ENCODE measurements at regions of chr20 and their contacts with region 1.

Region 1: GRCh38 chr20:3888622-3889488 is at the start of gene PANK2:
- DNase-seq: peak; percentile 99
- H3K4me3 ChIP-seq: peak within 1 kb of the TSS; percentile 100
- H3K27ac ChIP-seq: peak within 1 kb of the TSS; percentile 95 to 98
- H3K4me1 ChIP-seq: peaks cover 4% of the 10 kb centered on the region
- H3K27me3 ChIP-seq: no peaks in the 10 kb centered on the region
- CTCF ChIP-seq: peak in 3 of 4 experiments; percentile 15 to 60 (median 56)
- POLR2A ChIP-seq: peak; percentile 97
- total RNA-seq, gene PANK2: 49.7 to 53.9 TPM

Region 2: DNA sequence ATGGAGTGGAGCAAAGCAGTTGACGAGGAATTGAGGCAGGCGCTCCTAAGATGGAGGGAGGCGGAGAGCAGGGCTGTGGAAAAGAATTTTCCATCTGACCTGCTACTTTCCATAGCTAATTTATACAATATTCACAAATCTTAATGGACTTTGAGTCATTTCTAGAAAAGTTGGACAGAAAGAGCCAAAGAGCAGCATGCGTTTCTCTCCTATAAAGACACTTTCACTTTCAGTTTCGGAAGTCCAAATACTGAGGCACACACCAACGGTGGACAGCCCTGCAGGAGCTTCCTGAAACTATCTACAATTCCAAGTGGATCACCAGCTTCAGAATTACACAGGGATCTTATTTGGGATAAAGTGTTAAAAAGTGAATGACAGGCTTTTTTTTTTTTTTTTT is 43.8 kb after region 1 on chr20:
- intact Hi-C with region 1: loop called (anchors 5 kb)
- DNase-seq: no peak
- H3K4me3 ChIP-seq: peak overlapping the region; percentile 12 to 20
- H3K27ac ChIP-seq: peak overlapping the region; percentile 23 to 69
- H3K4me1 ChIP-seq: no peaks in the 10 kb centered on the region
- H3K27me3 ChIP-seq: no peaks in the 10 kb centered on the region
- CTCF ChIP-seq: no peak
- POLR2A ChIP-seq: no peak

Region 3: GRCh38 chr20:4014031-4014474 is 125.2 kb after region 1 on chr20:
- intact Hi-C with region 1: loop called (anchors 5 kb)
- DNase-seq: peak; percentile 93
- H3K4me3 ChIP-seq: peak overlapping the region; percentile 90 to 98
- H3K27ac ChIP-seq: peak overlapping the region; percentile 95 to 96
- H3K4me1 ChIP-seq: no peaks in the 10 kb centered on the region
- H3K27me3 ChIP-seq: no peaks in the 10 kb centered on the region
- CTCF ChIP-seq: peak in 3 of 4 experiments; percentile 69 to 93 (median 75)
- POLR2A ChIP-seq: peak; percentile 30

Region 4: DNA sequence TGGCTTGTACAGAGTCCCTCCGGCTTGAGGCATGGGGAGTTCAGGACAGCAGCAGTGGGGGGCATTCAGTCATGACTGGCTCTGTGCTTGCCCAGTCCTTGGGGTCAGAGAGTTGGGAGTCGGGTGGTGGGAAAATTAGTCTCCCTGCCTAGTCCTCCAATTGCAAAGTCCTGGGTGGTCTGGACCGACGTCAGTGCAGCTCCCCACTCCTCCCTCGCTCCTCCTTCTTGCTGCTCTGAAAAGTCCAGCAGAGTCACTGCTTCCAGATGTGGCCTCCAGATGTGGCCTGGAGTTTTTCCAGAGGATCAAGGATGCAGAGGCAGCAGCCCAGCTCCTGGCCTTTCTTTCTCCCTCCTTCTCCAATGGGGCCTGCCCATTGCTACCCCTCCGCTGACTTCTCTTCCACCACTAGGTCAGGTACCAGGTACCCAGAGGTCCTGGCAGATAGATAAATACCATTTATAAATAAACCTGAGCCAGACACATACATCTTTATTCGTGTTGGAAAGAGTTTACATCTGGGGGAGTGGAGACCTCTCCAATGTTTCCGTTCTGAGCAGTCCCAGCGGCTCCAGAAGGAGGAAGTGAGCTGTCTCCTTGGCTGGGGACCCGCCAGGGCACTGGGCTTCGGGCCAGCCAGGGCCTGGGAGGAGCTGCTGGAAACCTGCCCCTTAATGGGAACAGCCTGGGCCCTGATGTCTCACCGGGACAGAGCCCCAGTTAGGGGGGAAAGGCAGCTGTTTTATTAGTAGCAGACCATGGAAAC is 175.5 kb after region 1 on chr20:
- intact Hi-C with region 1: loop called (anchors 5 kb)
- DNase-seq: peak; percentile 91
- H3K4me3 ChIP-seq: no peak overlapping the region
- H3K27ac ChIP-seq: peak overlapping the region; percentile 66 to 75
- H3K4me1 ChIP-seq: peaks cover 4% of the 10 kb centered on the region
- H3K27me3 ChIP-seq: no peaks in the 10 kb centered on the region
- CTCF ChIP-seq: peak in 1 of 4 experiments; percentile 3
- POLR2A ChIP-seq: no peak

Region 5: GRCh38 chr20:4089756-4090487 is 201.1 kb after region 1 on chr20:
- intact Hi-C with region 1: loop called (anchors 5 kb)
- DNase-seq: no peak
- H3K4me3 ChIP-seq: no peak overlapping the region
- H3K27ac ChIP-seq: no peak overlapping the region
- H3K4me1 ChIP-seq: no peaks in the 10 kb centered on the region
- H3K27me3 ChIP-seq: no peaks in the 10 kb centered on the region
- CTCF ChIP-seq: no peak
- POLR2A ChIP-seq: no peak

Measured in prostate gland (tissue), 2 donors.